Activated CD4-positive, alpha-beta T cell treated with anti-CD3 and anti-CD28 coated beads, Interleukin-2, amount 10 ng/mL, durations not matched to agents 24 days and 14 days (primary cell): ENCODE measurements at regions of chr10 and their contacts with region 1.

Region 1: DNA sequence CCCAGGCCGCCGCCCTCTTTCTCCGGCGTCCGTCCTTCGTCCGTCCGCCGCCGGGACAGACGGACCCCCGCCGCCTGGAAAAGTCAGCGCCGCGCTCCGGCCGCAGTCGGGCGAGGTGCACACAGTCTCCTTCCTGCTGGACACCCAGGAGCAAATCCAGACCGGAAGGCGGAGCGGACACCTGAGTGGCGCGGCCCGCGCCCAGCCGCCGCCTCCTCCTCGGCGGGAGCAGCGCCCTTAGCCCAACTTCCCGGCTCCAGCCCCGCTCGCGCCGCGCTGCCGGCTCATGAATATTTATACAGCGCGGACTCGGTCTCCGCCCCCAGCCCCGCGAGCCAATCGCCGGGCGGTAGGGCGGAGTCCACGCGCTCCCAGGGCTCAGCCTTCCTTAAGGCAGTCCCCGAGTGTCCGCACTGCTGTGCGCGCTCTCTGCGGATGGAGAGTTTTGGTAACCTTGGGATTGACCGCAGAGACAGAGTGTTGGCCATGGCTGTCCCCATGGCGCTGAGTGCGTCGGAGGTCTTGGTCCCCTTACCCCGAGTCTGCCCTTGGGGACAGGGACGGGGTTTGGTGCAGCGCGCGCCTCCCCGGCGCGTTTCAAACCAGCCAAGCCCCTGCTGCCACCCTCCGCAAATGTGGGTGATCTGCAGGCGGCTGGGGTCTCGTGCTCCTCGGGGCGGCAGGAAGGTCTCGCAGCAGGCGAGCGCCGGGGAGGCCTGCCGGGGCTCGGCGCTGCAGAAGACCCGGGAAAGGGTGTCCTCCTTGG is at the start of gene FZD8:
- DNase-seq: peak; percentile 91
- H3K4me3 Mint-ChIP-seq: peak within 1 kb of the TSS; percentile 82
- H3K27ac Mint-ChIP-seq: no peak within 1 kb of the TSS
- H3K4me1 Mint-ChIP-seq: peaks cover 11% of the 10 kb centered on the region
- H3K27me3 Mint-ChIP-seq: peaks cover 67% of the 10 kb centered on the region
- total RNA-seq, gene FZD8: 0.38 and 0.56 TPM in 2 replicates

Region 2: GRCh38 chr10:35661236-35661635 is 19.0 kb after region 1 on chr10:
- intact Hi-C with region 1: no loop called
- DNase-seq: no peak
- H3K4me3 Mint-ChIP-seq: no peak overlapping the region
- H3K27ac Mint-ChIP-seq: no peak overlapping the region
- H3K4me1 Mint-ChIP-seq: no peaks in the 10 kb centered on the region
- H3K27me3 Mint-ChIP-seq: peaks cover 6% of the 10 kb centered on the region

Region 3: DNA sequence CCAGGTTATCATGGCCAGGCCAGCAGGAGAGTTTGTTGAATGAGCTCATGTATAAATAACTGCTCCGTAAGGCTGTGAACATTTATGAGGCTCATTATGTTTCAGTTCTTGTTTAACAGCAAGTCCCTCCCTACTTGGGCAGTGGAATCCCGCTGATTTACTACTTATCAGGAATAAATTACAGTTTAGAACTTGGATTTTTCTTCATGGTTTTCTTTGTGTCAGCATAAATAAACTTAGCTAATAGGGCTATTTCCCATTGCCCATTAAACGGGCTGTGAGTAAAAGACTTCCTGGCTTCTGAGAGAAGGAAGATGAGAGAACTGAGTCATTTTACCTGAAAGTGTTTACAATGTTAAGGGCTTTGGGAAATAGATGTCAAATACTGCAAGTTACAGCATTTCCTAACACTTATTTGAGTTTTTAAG is 781.6 kb after region 1 on chr10:
- intact Hi-C with region 1: no loop called
- DNase-seq: no peak
- H3K4me3 Mint-ChIP-seq: no peak overlapping the region
- H3K27ac Mint-ChIP-seq: no peak overlapping the region
- H3K4me1 Mint-ChIP-seq: no peaks in the 10 kb centered on the region
- H3K27me3 Mint-ChIP-seq: no peaks in the 10 kb centered on the region

Region 4: DNA sequence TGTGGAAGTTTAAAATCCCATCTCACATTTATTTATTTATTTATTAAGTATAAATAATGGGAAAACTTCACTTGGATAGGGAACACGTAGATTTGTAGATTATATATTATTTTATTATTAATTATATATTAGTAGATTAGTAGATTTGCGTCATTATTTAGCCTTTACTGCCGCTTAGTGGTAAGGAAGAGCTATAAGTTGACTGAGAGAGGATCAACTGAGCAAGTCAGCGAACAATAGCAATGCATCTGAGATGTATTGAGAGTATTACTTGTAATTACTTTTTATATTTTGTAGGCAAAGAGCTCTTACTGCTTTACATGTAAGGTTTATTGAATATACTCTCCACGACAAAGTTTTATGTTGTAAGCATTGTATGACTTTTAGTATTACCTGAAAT is 1238.7 kb after region 1 on chr10:
- intact Hi-C with region 1: loop called (anchors 5 kb)
- DNase-seq: no peak
- H3K4me3 Mint-ChIP-seq: no peak overlapping the region
- H3K27ac Mint-ChIP-seq: no peak overlapping the region
- H3K4me1 Mint-ChIP-seq: no peaks in the 10 kb centered on the region
- H3K27me3 Mint-ChIP-seq: no peaks in the 10 kb centered on the region